WTC11 (cell line): ENCODE measurements at regions of chr5 and their contacts with region 1.

Region 1: DNA sequence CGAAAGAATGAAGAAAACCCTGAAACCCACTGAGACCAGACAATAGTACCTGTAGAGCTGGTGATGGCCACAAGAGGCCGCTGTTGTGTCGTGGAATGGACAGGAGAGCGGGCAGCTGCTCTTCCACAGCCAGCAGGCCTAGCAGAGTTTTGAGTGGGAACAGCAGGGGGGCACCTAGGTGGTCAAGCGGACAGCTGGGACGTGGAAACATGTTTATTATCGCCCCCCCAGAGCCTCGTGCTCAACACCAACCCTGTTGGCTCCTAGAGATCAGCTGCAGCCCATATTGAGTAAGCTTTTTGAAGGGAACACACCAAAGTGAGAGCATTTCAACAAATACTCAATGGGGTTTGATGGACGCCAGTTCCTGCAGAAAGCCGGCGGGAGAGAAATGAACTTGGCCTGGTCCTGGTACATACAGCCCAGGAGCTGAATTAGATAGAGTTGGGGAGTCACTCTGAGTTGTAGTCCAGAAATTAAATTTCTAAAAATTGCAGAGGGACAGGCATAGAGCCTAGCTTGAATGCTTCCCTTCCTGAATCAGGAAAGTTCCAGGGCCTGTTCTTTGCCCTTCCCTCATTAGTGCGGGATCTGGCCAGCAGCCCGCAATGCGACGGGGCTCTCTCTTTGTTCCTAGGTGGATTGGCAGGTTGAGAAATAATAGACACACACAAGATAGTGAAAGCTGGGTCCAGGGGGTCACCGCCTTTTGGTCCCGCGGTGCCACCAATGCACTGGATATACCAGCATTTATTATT is 33.8 kb downstream of the MFAP3 start:
- DNase-seq: peak; percentile 87
- ATAC-seq: peak; percentile 92
- H3K4me3 Mint-ChIP-seq: no peak overlapping the region
- H3K27ac Mint-ChIP-seq: no peak overlapping the region
- H3K4me1 Mint-ChIP-seq: peaks cover 10% of the 10 kb centered on the region
- H3K27me3 Mint-ChIP-seq: peaks cover 6% of the 10 kb centered on the region
- CTCF ChIP-seq: peak; percentile 92

Region 2: GRCh38 chr5:154038707-154039457 is 33.7 kb before region 1 on chr5 and contains the starts of genes FAM114A2 and MFAP3:
- CTCF ChIA-PET with region 1: interaction called, 14 read pairs
- POLR2A ChIA-PET with region 1: interaction called, 3 read pairs
- DNase-seq: peak; percentile 89
- ATAC-seq: peak; percentile 99
- H3K4me3 Mint-ChIP-seq: peak within 1 kb of the TSS; percentile 94
- H3K27ac Mint-ChIP-seq: peak within 1 kb of the TSS; percentile 75
- H3K4me1 Mint-ChIP-seq: peaks cover 17% of the 10 kb centered on the region
- H3K27me3 Mint-ChIP-seq: no peaks in the 10 kb centered on the region; the same call in 1 of the 2 replicates
- CTCF ChIP-seq: no peak
- total RNA-seq, gene FAM114A2: 10.1 to 12.2 TPM (median 10.7 TPM) in 3 replicates
- total RNA-seq, gene MFAP3: 20.0 to 22.1 TPM (median 21.2 TPM) in 3 replicates

Region 3: DNA sequence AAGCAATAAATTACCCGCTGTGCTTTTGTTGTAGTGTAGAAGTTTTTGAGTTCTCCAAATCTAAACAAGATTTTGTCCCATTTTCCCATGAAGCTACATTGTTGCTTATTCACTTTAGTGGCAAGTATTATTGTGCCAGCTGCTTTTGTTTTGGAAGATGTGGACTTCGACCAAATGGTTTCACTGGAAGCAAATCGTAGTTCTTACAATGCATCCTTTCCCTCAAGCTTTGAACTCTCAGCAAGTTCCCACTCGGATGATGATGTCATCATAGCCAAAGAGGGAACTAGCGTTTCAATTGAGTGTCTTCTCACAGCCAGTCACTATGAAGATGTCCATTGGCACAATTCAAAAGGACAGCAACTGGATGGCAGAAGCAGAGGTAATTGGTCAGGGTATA is 23.0 kb before region 1 on chr5:
- CTCF ChIA-PET with region 1: no interaction called
- POLR2A ChIA-PET with region 1: no interaction called
- DNase-seq: no peak
- ATAC-seq: no peak
- H3K4me3 Mint-ChIP-seq: no peak overlapping the region
- H3K27ac Mint-ChIP-seq: 0 out of 2 replicates have a peak overlapping the region, but pooled peaks have one; percentile 18
- H3K4me1 Mint-ChIP-seq: no peaks in the 10 kb centered on the region
- H3K27me3 Mint-ChIP-seq: no peaks in the 10 kb centered on the region
- CTCF ChIP-seq: no peak

Region 4: DNA sequence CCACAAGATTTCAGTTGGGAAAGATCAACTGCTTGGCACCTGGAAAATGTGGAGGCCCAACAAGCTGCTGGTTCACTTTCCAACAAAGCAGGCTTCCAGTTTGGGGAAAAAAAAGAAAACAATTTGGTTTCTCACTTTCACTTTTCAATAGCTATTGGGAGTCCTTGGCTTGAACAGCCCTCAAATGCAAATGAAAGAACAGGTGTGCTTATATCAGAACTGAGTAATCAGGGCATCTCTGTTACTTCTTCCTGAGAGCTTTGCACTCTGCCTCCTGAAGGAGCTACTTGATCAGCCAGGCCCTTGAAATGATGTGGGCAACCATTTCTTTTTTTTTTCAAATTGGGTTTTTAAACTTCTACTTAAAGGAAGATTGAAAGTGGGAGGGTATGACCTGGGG is 39.7 kb after region 1 on chr5:
- CTCF ChIA-PET with region 1: interaction called, 10 read pairs
- POLR2A ChIA-PET with region 1: interaction called, 3 read pairs
- DNase-seq: no peak
- ATAC-seq: no peak
- H3K4me3 Mint-ChIP-seq: no peak overlapping the region
- H3K27ac Mint-ChIP-seq: no peak overlapping the region
- H3K4me1 Mint-ChIP-seq: peaks cover 52% of the 10 kb centered on the region
- H3K27me3 Mint-ChIP-seq: peaks cover 8% of the 10 kb centered on the region; the same call in 1 of the 2 replicates
- CTCF ChIP-seq: no peak

Region 5: DNA sequence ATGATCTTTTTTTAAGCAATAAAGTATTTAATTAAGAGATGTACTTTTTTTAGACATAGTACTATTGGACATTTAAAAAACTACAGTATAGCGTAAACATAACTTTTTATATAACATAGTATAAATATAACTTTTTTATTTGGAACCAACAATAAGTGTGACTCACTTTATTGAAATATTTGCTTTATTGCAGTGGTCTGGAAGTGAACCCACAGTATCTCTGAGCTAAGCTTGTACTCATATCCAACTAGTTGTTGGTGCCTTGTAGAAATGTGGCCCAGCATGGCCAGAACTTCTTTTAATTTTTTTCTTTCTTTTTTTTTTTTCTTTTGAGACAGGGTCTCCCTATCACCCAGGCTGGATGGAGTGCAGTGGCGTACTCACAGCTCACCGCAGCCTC is 56.4 kb after region 1 on chr5:
- CTCF ChIA-PET with region 1: no interaction called
- POLR2A ChIA-PET with region 1: no interaction called
- DNase-seq: no peak
- ATAC-seq: no peak
- H3K4me3 Mint-ChIP-seq: no peak overlapping the region
- H3K27ac Mint-ChIP-seq: no peak overlapping the region
- H3K4me1 Mint-ChIP-seq: peaks cover 4% of the 10 kb centered on the region; the same call in 1 of the 2 replicates
- H3K27me3 Mint-ChIP-seq: no peaks in the 10 kb centered on the region; the same call in 1 of the 2 replicates
- CTCF ChIP-seq: no peak

Region 6: DNA sequence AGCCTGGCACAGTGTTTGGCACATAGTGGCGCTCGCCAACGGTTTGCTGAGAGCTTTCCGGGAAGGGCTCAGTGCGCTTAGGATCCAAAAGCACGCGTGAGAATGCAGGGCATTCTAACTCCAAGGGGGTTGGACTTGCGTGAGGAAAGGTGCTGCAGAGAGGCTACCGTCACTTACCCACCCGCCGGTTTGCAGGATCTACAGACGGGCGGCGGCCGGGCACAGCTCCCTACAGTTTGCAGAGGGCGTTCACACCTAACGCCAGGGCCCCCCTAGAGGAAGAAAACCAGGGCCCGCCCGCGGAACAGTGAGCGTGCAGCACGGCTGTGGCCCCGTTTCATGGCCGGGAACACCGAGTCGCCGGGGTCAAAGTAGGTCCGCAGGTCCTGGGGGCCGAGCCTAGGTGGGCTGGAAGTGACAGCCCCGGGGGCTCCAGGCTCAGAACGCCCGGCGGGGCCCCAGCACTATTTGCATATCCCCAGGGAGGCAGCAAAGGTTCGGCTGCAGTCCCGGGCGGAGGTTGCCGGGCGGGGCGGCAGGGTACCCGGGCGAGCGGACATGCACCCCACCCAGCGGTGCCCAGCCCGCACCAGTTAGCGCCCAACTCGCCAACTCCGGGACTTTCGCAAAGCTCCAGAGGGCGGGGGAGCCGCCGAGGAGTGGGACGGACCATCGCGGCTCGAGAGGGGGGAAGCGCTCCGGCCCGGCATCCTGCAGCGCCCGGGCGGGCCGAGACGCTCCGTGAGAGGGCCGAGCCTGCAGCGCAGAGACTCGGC is 117.4 kb after region 1 on chr5:
- CTCF ChIA-PET with region 1: interaction called, 57 read pairs
- POLR2A ChIA-PET with region 1: no interaction called
- DNase-seq: peak; percentile 81
- ATAC-seq: peak; percentile 61
- H3K4me3 Mint-ChIP-seq: peak overlapping the region; percentile 73
- H3K27ac Mint-ChIP-seq: no peak overlapping the region
- H3K4me1 Mint-ChIP-seq: peaks cover 50% of the 10 kb centered on the region
- H3K27me3 Mint-ChIP-seq: peaks cover 52% of the 10 kb centered on the region
- CTCF ChIP-seq: no peak

Region 7: GRCh38 chr5:154405078-154405792 is 332.6 kb after region 1 on chr5:
- CTCF ChIA-PET with region 1: interaction called, 72 read pairs
- POLR2A ChIA-PET with region 1: no interaction called
- DNase-seq: peak; percentile 86
- ATAC-seq: peak; percentile 93
- H3K4me3 Mint-ChIP-seq: peak overlapping the region; percentile 57
- H3K27ac Mint-ChIP-seq: no peak overlapping the region
- H3K4me1 Mint-ChIP-seq: peaks cover 13% of the 10 kb centered on the region
- H3K27me3 Mint-ChIP-seq: no peaks in the 10 kb centered on the region; the same call in 1 of the 2 replicates
- CTCF ChIP-seq: peak; percentile 86